Calu3 (cell line): ENCODE measurements at regions of chr7 and their contacts with region 1.

Region 1: GRCh38 chr7:108181073-108181985 is 51.2 kb upstream of the LAMB4 start:
- DNase-seq: peak; percentile 38
- H3K4me3 Mint-ChIP-seq: no peak overlapping the region
- H3K27ac Mint-ChIP-seq: no peak overlapping the region
- H3K4me1 Mint-ChIP-seq: no peaks in the 10 kb centered on the region
- H3K27me3 Mint-ChIP-seq: no peaks in the 10 kb centered on the region
- CTCF ChIP-seq: peak; percentile 38

Region 2: DNA sequence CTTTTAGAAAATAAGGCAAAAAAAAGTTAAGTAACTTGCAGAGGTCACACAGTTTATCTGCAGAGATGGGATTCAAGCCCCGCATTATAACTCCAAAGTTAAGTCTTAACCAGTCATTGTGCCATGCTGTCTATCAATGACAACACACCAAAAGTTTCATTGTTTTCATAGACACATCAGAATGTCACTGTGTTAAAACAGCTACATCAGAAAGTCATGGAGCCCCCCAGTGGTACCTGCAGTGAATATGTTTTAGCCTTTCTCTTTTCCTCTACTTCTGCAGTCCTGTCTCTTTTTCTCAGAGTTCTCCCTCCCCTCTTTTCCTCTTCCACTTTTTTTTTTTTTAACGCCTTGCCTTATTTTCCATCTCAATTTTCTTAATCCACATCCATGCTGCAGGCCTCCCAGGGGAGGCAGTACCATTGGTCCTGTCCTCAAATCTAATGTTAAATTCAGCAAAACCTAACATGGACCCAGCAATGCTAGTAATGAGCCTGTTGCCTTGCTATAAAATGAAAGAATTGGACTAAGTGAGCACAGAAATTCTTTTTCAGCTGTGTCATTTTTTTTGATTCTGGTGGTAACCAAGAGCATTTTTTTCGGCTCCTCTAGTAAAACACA is 278.7 kb after region 1 on chr7:
- CTCF ChIA-PET with region 1: interaction called, 3 read pairs
- intact Hi-C with region 1: loop called (anchors 1 kb)
- DNase-seq: peak; percentile 35
- H3K4me3 Mint-ChIP-seq: no peak overlapping the region
- H3K27ac Mint-ChIP-seq: no peak overlapping the region
- H3K4me1 Mint-ChIP-seq: peaks cover 15% of the 10 kb centered on the region
- H3K27me3 Mint-ChIP-seq: peaks cover 20% of the 10 kb centered on the region
- CTCF ChIP-seq: no peak

Region 3: GRCh38 chr7:108497082-108497725 is 315.9 kb after region 1 on chr7:
- CTCF ChIA-PET with region 1: interaction called, 4 read pairs
- intact Hi-C with region 1: loop called (anchors 2 kb)
- DNase-seq: peak; percentile 38
- H3K4me3 Mint-ChIP-seq: no peak overlapping the region
- H3K27ac Mint-ChIP-seq: no peak overlapping the region
- H3K4me1 Mint-ChIP-seq: no peaks in the 10 kb centered on the region
- H3K27me3 Mint-ChIP-seq: no peaks in the 10 kb centered on the region
- CTCF ChIP-seq: peak; percentile 50